Ovary (tissue), 10 donors: ENCODE measurements at regions of chr12 and their contacts with region 1.

Region 1: GRCh38 chr12:129009833-129010622 is 156.8 kb downstream of the GLT1D1 start:
- DNase-seq: no peak
- H3K4me3 ChIP-seq: no peak overlapping the region
- H3K27ac ChIP-seq: no peak overlapping the region
- H3K4me1 ChIP-seq: no peaks in the 10 kb centered on the region
- H3K27me3 ChIP-seq: no peaks in the 10 kb centered on the region
- CTCF ChIP-seq: no peak
- EP300 ChIP-seq: no peak
- POLR2A ChIP-seq: no peak

Region 2: GRCh38 chr12:129423041-129423580 is 413.1 kb after region 1 on chr12:
- intact Hi-C with region 1: loop called in 1 of 4 experiments (anchors 5 kb)
- DNase-seq: no peak
- H3K4me3 ChIP-seq: no peak overlapping the region
- H3K27ac ChIP-seq: no peak overlapping the region
- H3K4me1 ChIP-seq: no peaks in the 10 kb centered on the region
- H3K27me3 ChIP-seq: no peaks in the 10 kb centered on the region
- CTCF ChIP-seq: no peak
- EP300 ChIP-seq: no peak
- POLR2A ChIP-seq: no peak